Natural killer cell (primary cell): ENCODE measurements at regions of chr12 and their contacts with region 1.

Region 1: GRCh38 chr12:9049520-9050133 is 60.3 kb downstream of the KLRG1 start:
- DNase-seq: peak in 1 of 2 donors; percentile 80
- ATAC-seq: peak in 2 of 3 donors; percentile 67 to 72
- H3K4me3 ChIP-seq: no peak overlapping the region
- H3K4me3 Mint-ChIP-seq: no peak overlapping the region
- H3K27ac ChIP-seq: no peak overlapping the region
- H3K27ac Mint-ChIP-seq: peak overlapping the region in 1 of 2 donors; percentile 47
- H3K4me1 ChIP-seq: peaks cover 8% of the 10 kb centered on the region
- H3K4me1 Mint-ChIP-seq: peaks cover 10 to 23% of the 10 kb centered on the region in 2 donors
- H3K27me3 ChIP-seq: no peaks in the 10 kb centered on the region
- H3K27me3 Mint-ChIP-seq: no peaks in the 10 kb centered on the region
- CTCF ChIP-seq: peak; percentile 76

Region 2: GRCh38 chr12:8544295-8544694 is 505.3 kb before region 1 on chr12:
- intact Hi-C with region 1: loop called (anchors 10 kb)
- DNase-seq: peak; percentile 37 to 82
- ATAC-seq: peak; percentile 67 to 86 (median 76)
- H3K4me3 ChIP-seq: no peak overlapping the region
- H3K4me3 Mint-ChIP-seq: no peak overlapping the region
- H3K27ac ChIP-seq: no peak overlapping the region
- H3K27ac Mint-ChIP-seq: no peak overlapping the region
- H3K4me1 ChIP-seq: no peaks in the 10 kb centered on the region
- H3K4me1 Mint-ChIP-seq: no peaks in the 10 kb centered on the region
- H3K27me3 ChIP-seq: peaks cover 17% of the 10 kb centered on the region
- H3K27me3 Mint-ChIP-seq: peaks cover 19 to 38% of the 10 kb centered on the region in 2 donors
- CTCF ChIP-seq: peak; percentile 98

Region 3: GRCh38 chr12:8681041-8681902 is 368.4 kb before region 1 on chr12:
- intact Hi-C with region 1: loop called (anchors 1 kb)
- DNase-seq: no peak
- ATAC-seq: no peak
- H3K4me3 ChIP-seq: no peak overlapping the region
- H3K4me3 Mint-ChIP-seq: no peak overlapping the region
- H3K27ac ChIP-seq: no peak overlapping the region
- H3K27ac Mint-ChIP-seq: no peak overlapping the region
- H3K4me1 ChIP-seq: no peaks in the 10 kb centered on the region
- H3K4me1 Mint-ChIP-seq: peaks cover 0 to 7% of the 10 kb centered on the region in 2 donors
- H3K27me3 ChIP-seq: no peaks in the 10 kb centered on the region
- H3K27me3 Mint-ChIP-seq: peaks cover 0 to 3% of the 10 kb centered on the region in 2 donors
- CTCF ChIP-seq: no peak

Region 4: DNA sequence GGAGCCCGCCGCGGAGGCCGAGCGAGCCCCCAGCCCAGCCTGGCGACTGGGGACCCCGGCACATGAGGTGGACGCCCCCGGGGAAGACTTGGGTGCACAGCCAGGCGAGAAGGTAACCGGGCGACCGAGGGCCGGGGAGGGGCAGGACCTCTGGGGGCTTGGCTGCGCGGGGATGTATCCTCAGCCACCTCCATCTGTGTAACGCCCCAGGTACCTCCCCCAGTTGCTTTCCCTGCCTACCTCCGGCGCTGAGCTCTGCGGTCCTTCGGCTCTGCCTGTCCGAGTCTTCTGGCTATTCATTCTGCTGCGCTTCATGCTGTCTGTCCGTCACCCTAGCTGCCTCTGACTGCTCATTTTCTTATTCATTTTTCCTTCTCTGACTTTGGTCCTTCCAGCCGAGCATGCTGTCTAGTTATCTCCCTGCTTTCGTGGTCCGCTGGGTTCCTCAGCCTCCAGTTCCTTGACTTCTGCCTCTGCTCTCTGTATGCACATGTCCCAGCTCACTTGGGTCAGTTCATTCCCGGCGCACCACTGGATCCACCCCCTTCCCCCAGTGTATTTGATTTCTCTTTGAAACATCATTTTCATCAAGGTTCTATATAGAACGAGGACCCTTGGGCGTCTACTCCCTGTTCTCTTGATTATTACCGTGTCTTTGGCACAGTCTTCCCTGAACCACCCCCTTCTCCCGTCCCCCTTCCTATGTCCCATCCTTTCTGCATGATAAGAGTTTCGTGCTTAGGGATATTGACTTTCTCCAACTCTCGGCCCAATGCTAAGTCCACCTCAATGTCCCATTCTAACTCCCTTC is 134.7 kb before region 1 on chr12:
- intact Hi-C with region 1: loop called (anchors 2 kb)
- DNase-seq: peak; percentile 45 to 77
- ATAC-seq: peak; percentile 75 to 78 (median 77)
- H3K4me3 ChIP-seq: peak overlapping the region; percentile 60
- H3K4me3 Mint-ChIP-seq: no peak overlapping the region
- H3K27ac ChIP-seq: peak overlapping the region; percentile 45
- H3K27ac Mint-ChIP-seq: no peak overlapping the region
- H3K4me1 ChIP-seq: peaks cover 10% of the 10 kb centered on the region
- H3K4me1 Mint-ChIP-seq: peaks cover 13 to 14% of the 10 kb centered on the region in 2 donors
- H3K27me3 ChIP-seq: no peaks in the 10 kb centered on the region
- H3K27me3 Mint-ChIP-seq: no peaks in the 10 kb centered on the region
- CTCF ChIP-seq: no peak

Region 5: GRCh38 chr12:8996682-8997360 is 52.8 kb before region 1 on chr12:
- intact Hi-C with region 1: no loop called
- DNase-seq: peak in 1 of 2 donors; percentile 60
- ATAC-seq: peak; percentile 77
- H3K4me3 ChIP-seq: no peak overlapping the region
- H3K4me3 Mint-ChIP-seq: peak overlapping the region; percentile 67
- H3K27ac ChIP-seq: peak overlapping the region; percentile 67
- H3K27ac Mint-ChIP-seq: peak overlapping the region; percentile 81 to 90
- H3K4me1 ChIP-seq: peaks cover 60% of the 10 kb centered on the region
- H3K4me1 Mint-ChIP-seq: peaks cover 70 to 77% of the 10 kb centered on the region in 2 donors
- H3K27me3 ChIP-seq: no peaks in the 10 kb centered on the region
- H3K27me3 Mint-ChIP-seq: no peaks in the 10 kb centered on the region
- CTCF ChIP-seq: no peak